B cell (primary cell): ENCODE measurements at regions of chr4 and their contacts with region 1.

Region 1: GRCh38 chr4:39166177-39166576 is 16.2 kb upstream of the WDR19 start:
- DNase-seq: peak; percentile 74
- ATAC-seq: peak; percentile 88
- H3K4me3 ChIP-seq: peak overlapping the region in 2 of 5 experiments; percentile 16 to 48
- H3K4me3 Mint-ChIP-seq: peak overlapping the region; percentile 75
- H3K27ac ChIP-seq: peak overlapping the region; percentile 92 to 94
- H3K27ac Mint-ChIP-seq: peak overlapping the region; percentile 88
- H3K4me1 ChIP-seq: peaks cover 36 to 38% of the 10 kb centered on the region in 2 donors
- H3K4me1 Mint-ChIP-seq: peaks cover 51% of the 10 kb centered on the region
- H3K27me3 ChIP-seq: no peaks in the 10 kb centered on the region
- H3K27me3 Mint-ChIP-seq: no peaks in the 10 kb centered on the region
- CTCF ChIP-seq: no peak

Region 2: DNA sequence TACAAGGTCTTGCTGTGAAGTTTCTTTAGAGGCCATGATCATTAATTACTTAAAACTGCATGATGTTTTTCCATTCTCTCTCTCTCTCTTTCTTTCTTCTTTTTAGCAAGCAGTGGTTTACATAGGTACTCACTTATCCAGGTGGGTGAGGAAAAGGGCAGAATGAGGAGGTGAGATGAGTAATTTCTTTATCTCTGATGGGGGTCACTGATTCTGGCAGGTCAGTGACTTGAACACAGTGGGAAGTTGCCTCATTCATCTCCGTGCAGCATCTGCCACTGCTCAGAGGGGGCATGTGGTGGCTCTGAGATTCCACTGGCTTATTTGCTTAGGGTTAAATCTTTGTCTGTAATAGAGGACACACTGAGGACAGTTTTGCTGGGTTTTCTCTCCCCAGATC is 236.0 kb before region 1 on chr4:
- CTCF ChIA-PET with region 1: no interaction called
- POLR2A ChIA-PET with region 1: no interaction called
- intact Hi-C with region 1: no loop called
- DNase-seq: no peak
- ATAC-seq: no peak
- H3K4me3 ChIP-seq: no peak overlapping the region
- H3K4me3 Mint-ChIP-seq: no peak overlapping the region
- H3K27ac ChIP-seq: no peak overlapping the region
- H3K27ac Mint-ChIP-seq: no peak overlapping the region
- H3K4me1 ChIP-seq: no peaks in the 10 kb centered on the region
- H3K4me1 Mint-ChIP-seq: no peaks in the 10 kb centered on the region
- H3K27me3 ChIP-seq: no peaks in the 10 kb centered on the region
- H3K27me3 Mint-ChIP-seq: no peaks in the 10 kb centered on the region
- CTCF ChIP-seq: no peak

Region 3: GRCh38 chr4:39181905-39182638 is 15.9 kb after region 1 on chr4 and contains the start of gene WDR19:
- CTCF ChIA-PET with region 1: interaction called, 8 read pairs
- POLR2A ChIA-PET with region 1: interaction called, 10 read pairs
- intact Hi-C with region 1: loop called (anchors 1 kb)
- DNase-seq: peak; percentile 99
- ATAC-seq: peak; percentile 96
- H3K4me3 ChIP-seq: peak within 1 kb of the TSS; percentile 76 to 99 (median 94)
- H3K4me3 Mint-ChIP-seq: peak within 1 kb of the TSS; percentile 47
- H3K27ac ChIP-seq: peak within 1 kb of the TSS; percentile 12 to 79
- H3K27ac Mint-ChIP-seq: no peak within 1 kb of the TSS
- H3K4me1 ChIP-seq: peaks cover 12 to 16% of the 10 kb centered on the region in 2 donors
- H3K4me1 Mint-ChIP-seq: peaks cover 8% of the 10 kb centered on the region
- H3K27me3 ChIP-seq: no peaks in the 10 kb centered on the region
- H3K27me3 Mint-ChIP-seq: no peaks in the 10 kb centered on the region
- CTCF ChIP-seq: peak; percentile 73
- total RNA-seq, gene WDR19: 79.8 and 83.2 TPM in 2 replicates